ENCODE measurements at regions of chr16 and their contacts with region 1.

Region 1: GRCh38 chr16:8892101-8892575 is 10.0 kb downstream of the LITAFD start:
- DNase-seq: peak; percentile 61 to 67
- ATAC-seq: peak; percentile 34 to 69
- H3K4me3 ChIP-seq: no peak overlapping the region
- H3K27ac ChIP-seq: peak overlapping the region; percentile 46 to 67 (median 57)
- H3K4me1 ChIP-seq: peaks cover 14 to 24% of the 10 kb centered on the region in 2 donors
- H3K27me3 ChIP-seq: no peaks in the 10 kb centered on the region
- CTCF ChIP-seq: no peak
- POLR2A ChIP-seq: no peak

Region 2: DNA sequence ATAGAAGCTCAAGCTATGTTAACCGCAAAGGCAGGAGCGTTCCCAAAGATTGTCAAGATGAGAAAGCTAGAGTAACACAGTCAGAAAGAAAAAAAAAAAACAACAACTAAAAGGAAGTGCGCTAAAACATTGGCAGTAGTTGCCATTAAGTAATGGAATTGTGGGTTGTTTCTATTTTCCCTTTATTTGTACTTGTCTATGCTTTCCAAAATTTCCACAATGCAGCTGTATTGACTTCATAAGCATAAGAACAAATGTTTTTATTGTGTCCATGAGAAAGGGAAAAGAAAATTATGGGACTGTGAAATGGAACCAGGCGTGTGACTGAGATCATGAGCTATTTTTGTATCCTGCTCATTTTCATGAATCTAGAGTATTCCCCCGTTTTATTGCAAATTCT is 455.2 kb before region 1 on chr16:
- in situ Hi-C with region 1: no loop called
- intact Hi-C with region 1: no loop called
- DNase-seq: no peak
- ATAC-seq: no peak
- H3K4me3 ChIP-seq: no peak overlapping the region
- H3K27ac ChIP-seq: no peak overlapping the region
- H3K4me1 ChIP-seq: no peaks in the 10 kb centered on the region
- H3K27me3 ChIP-seq: no peaks in the 10 kb centered on the region
- CTCF ChIP-seq: no peak
- POLR2A ChIP-seq: no peak

Region 3: GRCh38 chr16:8481810-8482209 is 410.3 kb before region 1 on chr16:
- in situ Hi-C with region 1: no loop called
- intact Hi-C with region 1: no loop called
- DNase-seq: no peak
- ATAC-seq: no peak
- H3K4me3 ChIP-seq: no peak overlapping the region
- H3K27ac ChIP-seq: no peak overlapping the region
- H3K4me1 ChIP-seq: no peaks in the 10 kb centered on the region
- H3K27me3 ChIP-seq: no peaks in the 10 kb centered on the region
- CTCF ChIP-seq: no peak
- POLR2A ChIP-seq: no peak

Region 4: DNA sequence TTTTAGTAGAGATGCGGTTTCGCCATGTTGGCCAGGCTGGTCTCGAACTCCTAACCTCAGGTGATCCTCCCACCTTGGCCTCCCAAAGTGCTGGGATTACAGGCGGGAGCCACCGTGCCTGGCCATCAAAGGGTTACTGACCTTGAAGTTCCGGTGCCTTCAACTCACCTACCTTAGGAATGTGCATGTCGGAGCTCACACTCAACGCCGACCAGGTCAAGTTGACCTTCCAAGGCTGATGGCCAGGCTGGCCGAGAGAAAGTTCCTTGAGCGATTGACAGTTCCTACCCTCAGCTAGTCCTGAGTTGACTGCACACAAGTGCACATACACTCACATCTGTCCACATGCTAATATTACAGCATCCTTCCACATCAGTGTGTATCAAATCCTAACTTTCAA is 105.8 kb before region 1 on chr16:
- in situ Hi-C with region 1: no loop called
- intact Hi-C with region 1: no loop called
- DNase-seq: no peak
- ATAC-seq: no peak
- H3K4me3 ChIP-seq: no peak overlapping the region
- H3K27ac ChIP-seq: no peak overlapping the region
- H3K4me1 ChIP-seq: no peaks in the 10 kb centered on the region
- H3K27me3 ChIP-seq: no peaks in the 10 kb centered on the region
- CTCF ChIP-seq: no peak
- POLR2A ChIP-seq: no peak

Region 5: GRCh38 chr16:8850279-8850885 is 41.8 kb before region 1 on chr16:
- in situ Hi-C with region 1: no loop called
- intact Hi-C with region 1: no loop called
- DNase-seq: peak in 1 of 2 donors; percentile 44
- ATAC-seq: peak; percentile 61 to 69
- H3K4me3 ChIP-seq: no peak overlapping the region
- H3K27ac ChIP-seq: peak overlapping the region; percentile 9 to 63 (median 50)
- H3K4me1 ChIP-seq: peaks cover 5 to 7% of the 10 kb centered on the region in 2 donors
- H3K27me3 ChIP-seq: no peaks in the 10 kb centered on the region
- CTCF ChIP-seq: no peak
- POLR2A ChIP-seq: peak in 1 of 2 donors; percentile 8

Region 6: DNA sequence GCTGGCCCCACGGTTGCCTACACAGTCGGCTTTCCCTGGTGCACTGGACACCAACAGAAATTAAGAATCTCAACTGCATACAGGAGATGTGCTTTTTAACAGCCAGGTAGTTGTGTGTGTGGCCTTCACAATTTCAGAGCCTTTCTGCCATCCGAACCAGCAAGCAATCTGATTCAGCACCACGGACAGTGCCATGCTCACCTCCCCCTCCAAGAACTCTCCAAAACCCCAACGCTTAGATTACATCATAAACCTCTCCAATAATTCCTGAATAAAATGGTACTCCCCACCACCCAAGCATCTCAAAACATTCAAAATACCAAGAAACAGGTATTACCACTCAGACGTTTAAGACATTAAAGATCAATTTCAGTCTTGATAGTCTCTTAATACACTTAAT is 39.7 kb after region 1 on chr16:
- in situ Hi-C with region 1: no loop called
- intact Hi-C with region 1: loop called (anchors 5 kb)
- DNase-seq: no peak
- ATAC-seq: no peak
- H3K4me3 ChIP-seq: no peak overlapping the region
- H3K27ac ChIP-seq: no peak overlapping the region
- H3K4me1 ChIP-seq: peaks cover 25 to 36% of the 10 kb centered on the region in 2 donors
- H3K27me3 ChIP-seq: no peaks in the 10 kb centered on the region
- CTCF ChIP-seq: no peak
- POLR2A ChIP-seq: no peak